ENCODE measurements at regions of chr2 and their contacts with region 1.

Region 1: GRCh38 chr2:85707304-85707703 is 13.1 kb downstream of the GNLY start:
- DNase-seq: peak; percentile 90

Region 2: DNA sequence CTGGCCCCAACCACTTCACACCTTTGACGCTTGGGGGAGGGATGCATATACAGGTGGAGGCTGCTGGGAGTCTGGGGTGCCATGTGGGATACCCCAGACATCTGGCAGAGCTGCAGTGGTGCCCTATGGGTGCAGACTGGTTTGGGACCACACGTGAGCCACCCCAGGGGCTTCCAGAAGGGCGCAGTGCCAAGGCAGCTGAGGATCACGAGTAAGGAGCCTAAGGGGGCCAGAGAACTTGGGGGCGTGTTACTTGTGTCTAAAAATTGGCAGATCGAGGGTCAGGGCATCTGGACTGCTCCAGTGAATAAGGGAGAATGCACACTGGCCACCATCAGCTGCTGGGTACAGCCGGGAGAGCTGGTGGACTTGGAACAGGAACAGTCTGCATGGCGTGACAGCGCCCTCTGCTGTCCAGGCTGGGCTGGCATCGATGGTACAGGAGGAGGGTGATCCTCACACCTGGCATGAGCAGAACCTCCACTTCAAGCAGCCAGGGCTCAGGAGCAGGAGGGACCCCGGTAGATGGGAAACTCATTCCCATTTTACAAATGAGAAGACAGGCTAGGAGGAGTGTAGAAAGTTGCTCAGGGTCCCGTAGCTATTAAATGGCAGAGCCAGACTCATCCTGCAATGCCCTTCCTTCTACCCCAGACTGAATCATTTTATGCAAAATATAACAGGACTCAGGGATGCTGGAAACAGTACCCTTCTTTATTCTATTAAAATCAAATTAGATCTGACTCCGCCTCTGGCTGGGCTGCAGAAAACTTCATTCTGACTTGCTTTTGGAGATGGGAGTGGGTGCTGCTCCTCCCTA is 106.9 kb after region 1 on chr2:
- in situ Hi-C with region 1: loop called (anchors 25 kb)
- DNase-seq: peak; percentile 91

Measured in SK-MEL-5 (cell line).